Posterior vena cava (tissue), 2 donors: ENCODE measurements at regions of chr15 and their contacts with region 1.

Region 1: GRCh38 chr15:83270176-83270575 is 14.3 kb downstream of the BNC1 start:
- DNase-seq: no peak

Region 2: DNA sequence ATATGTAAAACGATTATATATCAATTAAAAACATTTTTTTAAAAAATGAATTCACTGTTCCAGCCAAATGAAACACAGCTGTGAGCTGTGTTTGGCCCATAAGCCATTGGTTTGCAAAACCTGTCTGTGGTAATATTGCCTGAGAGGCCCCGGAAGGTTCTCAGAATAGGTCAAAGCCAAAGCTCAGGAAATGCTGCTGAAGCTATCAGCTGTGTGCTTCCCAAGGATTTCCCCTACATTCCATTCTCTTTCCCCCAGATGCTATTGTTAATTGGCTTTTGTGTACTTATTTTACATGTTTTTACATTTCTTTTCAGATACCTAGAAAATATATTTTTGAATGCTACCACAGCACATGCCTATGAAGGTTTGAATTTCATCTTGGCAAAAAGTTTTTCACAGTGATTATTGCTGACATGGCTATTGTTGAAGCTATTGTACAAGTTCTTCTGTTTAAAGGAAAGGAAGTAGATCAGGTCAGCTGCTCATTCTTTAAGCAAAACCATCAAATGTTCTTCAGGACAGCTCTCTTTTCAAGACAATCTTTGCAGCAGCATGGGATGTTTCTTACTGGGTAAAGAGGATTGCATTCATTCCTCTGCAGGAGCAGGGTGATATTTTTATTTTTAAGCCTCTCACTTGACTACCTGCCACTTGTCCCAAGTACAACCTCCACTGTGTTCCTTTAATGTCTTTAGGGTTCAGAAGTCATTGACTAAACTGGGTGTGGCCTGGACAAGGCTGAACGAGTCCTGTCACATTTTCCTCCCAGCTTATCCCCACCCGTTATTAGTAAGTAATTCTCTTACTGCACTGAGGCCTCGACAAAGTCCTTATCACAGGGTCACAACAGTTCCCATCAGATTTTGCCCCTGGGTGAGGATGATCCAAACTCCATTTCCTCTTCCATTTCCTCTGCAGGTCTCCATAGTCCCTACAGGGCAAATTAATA is 40.6 kb after region 1 on chr15:
- intact Hi-C with region 1: loop called in 1 of 2 experiments (anchors 2 kb)
- DNase-seq: no peak